Natural killer cell (primary cell): ENCODE measurements at regions of chr10 and their contacts with region 1.

Region 1: GRCh38 chr10:80453701-80454513 is at the start of gene TSPAN14:
- DNase-seq: peak; percentile 67 to 87
- ATAC-seq: peak; percentile 70 to 85 (median 80)
- H3K4me3 ChIP-seq: peak within 1 kb of the TSS; percentile 82
- H3K4me3 Mint-ChIP-seq: peak within 1 kb of the TSS; percentile 96
- H3K27ac ChIP-seq: peak within 1 kb of the TSS; percentile 74
- H3K27ac Mint-ChIP-seq: peak within 1 kb of the TSS; percentile 91 to 92
- H3K4me1 ChIP-seq: peaks cover 44% of the 10 kb centered on the region
- H3K4me1 Mint-ChIP-seq: peaks cover 33 to 35% of the 10 kb centered on the region in 2 donors
- H3K27me3 ChIP-seq: no peaks in the 10 kb centered on the region
- H3K27me3 Mint-ChIP-seq: no peaks in the 10 kb centered on the region
- CTCF ChIP-seq: no peak
- total RNA-seq, gene TSPAN14: 126 to 180 (median 173) TPM

Region 2: DNA sequence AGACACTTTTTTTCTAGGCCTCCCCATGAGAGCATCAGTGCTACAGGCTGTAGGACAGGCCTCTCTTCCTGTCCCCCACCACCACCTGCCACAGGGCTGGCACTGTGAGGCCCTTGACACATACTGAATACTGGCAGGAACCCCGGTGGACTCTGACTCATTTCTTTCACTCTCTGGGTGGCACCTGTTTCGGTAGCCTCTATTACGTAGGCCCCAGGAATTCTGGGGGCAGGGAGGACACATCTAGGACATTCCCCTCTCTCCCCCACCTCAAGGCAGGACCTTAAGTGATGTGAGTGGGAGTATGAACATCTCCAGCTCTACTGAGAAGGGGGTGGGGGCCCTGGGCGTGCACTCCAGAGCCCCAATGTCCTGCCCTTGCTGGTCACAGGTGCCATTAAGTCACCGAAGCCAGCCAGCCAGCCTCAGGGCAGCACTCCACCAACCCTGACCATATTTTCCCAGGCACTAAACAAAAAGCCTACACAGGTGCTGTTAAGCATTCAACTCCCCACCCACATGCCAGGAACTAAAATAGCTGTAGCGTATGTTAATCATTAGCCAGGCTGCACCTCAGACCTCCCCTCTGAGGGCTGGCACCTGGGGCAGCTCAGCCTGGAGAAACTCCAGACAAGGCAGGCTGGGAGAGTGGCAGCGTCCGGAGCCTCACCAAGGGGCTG is 257.5 kb before region 1 on chr10:
- intact Hi-C with region 1: no loop called
- DNase-seq: peak; percentile 63 to 72
- ATAC-seq: peak; percentile 81 to 91 (median 84)
- H3K4me3 ChIP-seq: no peak overlapping the region
- H3K4me3 Mint-ChIP-seq: peak overlapping the region; percentile 62
- H3K27ac ChIP-seq: peak overlapping the region; percentile 78
- H3K27ac Mint-ChIP-seq: peak overlapping the region; percentile 92 to 93
- H3K4me1 ChIP-seq: peaks cover 57% of the 10 kb centered on the region
- H3K4me1 Mint-ChIP-seq: peaks cover 66 to 71% of the 10 kb centered on the region in 2 donors
- H3K27me3 ChIP-seq: no peaks in the 10 kb centered on the region
- H3K27me3 Mint-ChIP-seq: no peaks in the 10 kb centered on the region
- CTCF ChIP-seq: no peak

Region 3: GRCh38 chr10:80464557-80465450 is 10.9 kb after region 1 on chr10:
- intact Hi-C with region 1: loop called (anchors 2 kb)
- DNase-seq: peak in 1 of 2 donors; percentile 60
- ATAC-seq: no peak
- H3K4me3 ChIP-seq: no peak overlapping the region
- H3K4me3 Mint-ChIP-seq: peak overlapping the region; percentile 89
- H3K27ac ChIP-seq: peak overlapping the region; percentile 62
- H3K27ac Mint-ChIP-seq: peak overlapping the region; percentile 91 to 92
- H3K4me1 ChIP-seq: peaks cover 99% of the 10 kb centered on the region
- H3K4me1 Mint-ChIP-seq: peaks cover 100% of the 10 kb centered on the region in 2 donors
- H3K27me3 ChIP-seq: no peaks in the 10 kb centered on the region
- H3K27me3 Mint-ChIP-seq: no peaks in the 10 kb centered on the region
- CTCF ChIP-seq: no peak

Region 4: DNA sequence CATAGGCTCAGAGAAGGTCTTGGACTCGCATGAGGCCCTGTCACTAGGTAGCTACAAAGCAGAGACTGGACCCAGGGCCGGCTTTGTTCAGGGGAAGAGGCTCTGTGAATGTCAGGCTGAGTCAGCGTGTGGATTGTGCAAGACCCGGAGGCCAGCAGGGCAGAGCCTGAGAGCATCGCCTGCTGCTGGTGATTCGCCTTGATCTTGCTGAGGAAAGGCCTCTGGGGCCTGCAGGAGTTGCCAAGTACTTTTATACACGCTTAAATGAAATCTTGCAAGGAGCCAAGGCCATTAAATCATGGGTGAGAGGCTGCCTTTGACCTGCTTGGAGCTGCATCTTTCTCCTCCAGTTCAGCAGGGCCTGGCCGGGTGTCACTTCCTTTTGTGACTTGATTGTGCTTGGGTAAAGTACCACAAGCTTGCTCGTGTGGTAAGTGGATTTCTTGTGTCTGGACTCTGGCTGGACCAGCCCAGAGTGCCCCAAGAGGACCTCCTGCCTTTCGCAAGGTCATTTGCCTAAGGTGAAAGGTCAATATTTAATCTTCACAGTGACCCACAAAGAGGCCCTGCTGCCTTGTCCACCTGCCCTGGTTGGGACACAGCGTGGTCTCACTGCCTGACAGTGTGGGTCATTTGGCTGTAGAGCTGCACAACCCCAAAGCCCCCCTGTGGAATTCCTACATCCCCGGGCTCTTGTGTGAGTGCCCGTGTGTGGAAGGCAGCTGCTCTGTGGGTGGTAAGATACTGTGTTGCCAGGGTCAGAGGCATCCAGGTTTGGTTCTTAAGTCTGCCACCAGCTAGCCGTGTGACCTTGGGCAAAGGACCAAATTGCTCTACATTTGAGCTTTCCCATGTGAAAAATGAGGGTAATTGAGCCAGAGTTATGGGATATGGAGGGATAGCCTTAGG is 45.2 kb after region 1 on chr10:
- intact Hi-C with region 1: loop called (anchors 2 kb)
- DNase-seq: peak; percentile 60 to 68
- ATAC-seq: peak; percentile 78 to 85 (median 81)
- H3K4me3 ChIP-seq: no peak overlapping the region
- H3K4me3 Mint-ChIP-seq: peak overlapping the region; percentile 75
- H3K27ac ChIP-seq: peak overlapping the region; percentile 77
- H3K27ac Mint-ChIP-seq: peak overlapping the region; percentile 75 to 81
- H3K4me1 ChIP-seq: peaks cover 89% of the 10 kb centered on the region
- H3K4me1 Mint-ChIP-seq: peaks cover 96 to 98% of the 10 kb centered on the region in 2 donors
- H3K27me3 ChIP-seq: no peaks in the 10 kb centered on the region
- H3K27me3 Mint-ChIP-seq: no peaks in the 10 kb centered on the region
- CTCF ChIP-seq: no peak